Activated B cell treated with CpG ODN at 0.5 μM for 24 hours (primary cell): ENCODE measurements at regions of chr13 and their contacts with region 1.

Region 1: DNA sequence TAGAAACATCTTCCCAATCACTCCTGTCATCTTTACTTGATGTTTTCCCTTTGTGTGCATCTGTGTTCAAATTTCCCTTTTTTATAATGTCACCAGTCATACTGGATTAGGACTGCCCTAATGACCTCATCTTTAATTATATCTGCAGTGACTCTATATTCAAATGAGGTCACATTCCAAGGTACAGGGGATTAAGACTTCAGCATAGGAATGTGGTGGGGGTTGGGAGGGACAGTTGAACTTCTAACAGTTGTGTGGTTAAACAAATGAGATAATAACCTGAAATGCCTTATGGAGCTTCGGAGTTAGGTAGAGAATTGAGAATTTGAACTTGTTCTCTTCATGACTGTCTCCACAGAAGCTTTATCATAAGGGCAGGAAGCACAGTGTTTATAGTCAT is 23.0 kb downstream of the PAN3 start:
- DNase-seq: no peak
- ATAC-seq: no peak
- H3K4me3 Mint-ChIP-seq: no peak overlapping the region
- H3K27ac Mint-ChIP-seq: no peak overlapping the region
- H3K4me1 Mint-ChIP-seq: peaks cover 68% of the 10 kb centered on the region
- H3K27me3 Mint-ChIP-seq: no peaks in the 10 kb centered on the region
- CTCF ChIP-seq: no peak

Region 2: GRCh38 chr13:28147495-28147894 is 13.9 kb before region 1 on chr13:
- CTCF ChIA-PET with region 1: no interaction called
- POLR2A ChIA-PET with region 1: interaction called, 5 read pairs
- intact Hi-C with region 1: loop called (anchors 2 kb)
- DNase-seq: no peak
- ATAC-seq: no peak
- H3K4me3 Mint-ChIP-seq: no peak overlapping the region
- H3K27ac Mint-ChIP-seq: no peak overlapping the region
- H3K4me1 Mint-ChIP-seq: peaks cover 62% of the 10 kb centered on the region
- H3K27me3 Mint-ChIP-seq: no peaks in the 10 kb centered on the region
- CTCF ChIP-seq: no peak

Region 3: GRCh38 chr13:28204690-28205443 is 43.5 kb after region 1 on chr13:
- CTCF ChIA-PET with region 1: no interaction called
- POLR2A ChIA-PET with region 1: no interaction called
- intact Hi-C with region 1: loop called (anchors 5 kb)
- DNase-seq: no peak
- ATAC-seq: no peak
- H3K4me3 Mint-ChIP-seq: no peak overlapping the region
- H3K27ac Mint-ChIP-seq: no peak overlapping the region
- H3K4me1 Mint-ChIP-seq: peaks cover 21% of the 10 kb centered on the region
- H3K27me3 Mint-ChIP-seq: no peaks in the 10 kb centered on the region
- CTCF ChIP-seq: no peak